ENCODE measurements at regions of chr19 and their contacts with region 1.

Region 1: GRCh38 chr19:48993175-48994034 is at the starts of genes GYS1 and RUVBL2:
- DNase-seq: peak; percentile 98
- ATAC-seq: peak; percentile 92
- H3K4me3 ChIP-seq: peak within 1 kb of the TSS; percentile 93
- H3K27ac ChIP-seq: peak within 1 kb of the TSS; percentile 36
- H3K4me1 ChIP-seq: peaks cover 6% of the 10 kb centered on the region; the same call in 1 of the 2 replicates
- H3K27me3 ChIP-seq: no peaks in the 10 kb centered on the region
- CTCF ChIP-seq: peak; percentile 72
- total RNA-seq, gene GYS1: 38.6 and 54.0 TPM in 2 replicates
- total RNA-seq, gene RUVBL2: 291 and 421 TPM in 2 replicates

Region 2: GRCh38 chr19:48553676-48554386 is 439.6 kb before region 1 on chr19:
- CTCF ChIA-PET with region 1: no interaction called
- POLR2A ChIA-PET with region 1: no interaction called
- intact Hi-C with region 1: no loop called
- DNase-seq: peak; percentile 43
- ATAC-seq: no peak
- H3K4me3 ChIP-seq: no peak overlapping the region
- H3K27ac ChIP-seq: no peak overlapping the region
- H3K4me1 ChIP-seq: peaks cover 32% of the 10 kb centered on the region
- H3K27me3 ChIP-seq: no peaks in the 10 kb centered on the region
- CTCF ChIP-seq: no peak

Region 3: DNA sequence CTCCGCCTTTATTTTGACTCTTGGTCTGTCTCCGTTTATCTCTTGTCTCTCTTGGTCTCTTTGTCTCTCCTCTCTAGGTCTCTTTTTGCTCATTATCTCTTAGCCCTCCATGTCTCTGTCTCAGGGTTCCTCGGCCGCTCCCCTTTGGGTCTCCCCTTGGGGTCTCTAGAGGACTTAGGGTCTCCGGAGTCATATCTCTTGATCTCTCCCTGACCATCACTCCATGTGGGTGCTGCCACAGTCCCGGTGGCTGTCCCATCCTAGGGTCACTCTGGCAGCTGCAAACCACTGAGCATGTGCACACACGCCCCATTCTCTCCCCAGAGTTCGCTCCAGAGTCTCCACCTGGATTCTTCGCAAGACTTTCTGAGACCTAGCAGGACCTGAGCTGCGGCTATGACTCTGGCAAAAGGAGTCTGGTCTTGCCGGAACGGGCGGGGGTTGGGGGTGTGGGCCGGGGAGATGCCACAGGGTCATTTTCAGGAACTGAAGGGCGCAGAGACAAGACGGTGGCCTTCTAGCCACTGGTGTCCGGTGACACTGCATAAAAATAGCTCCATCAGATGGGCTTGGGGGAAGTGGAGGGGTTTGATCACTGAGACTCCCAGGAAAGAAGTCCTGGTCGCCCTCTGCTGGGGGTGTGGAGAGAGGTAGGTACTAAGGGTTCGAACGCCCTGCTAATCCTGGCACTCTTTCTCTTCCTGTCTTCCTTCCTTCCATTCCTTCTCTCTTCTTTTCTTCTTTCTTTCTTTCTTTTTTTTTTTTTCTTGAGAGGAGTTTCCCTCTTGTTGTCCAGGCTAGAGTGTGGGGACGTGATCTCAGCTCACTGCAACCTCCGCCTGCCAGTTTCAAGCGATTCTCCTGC is 80.3 kb after region 1 on chr19:
- CTCF ChIA-PET with region 1: interaction called, 4 read pairs
- POLR2A ChIA-PET with region 1: no interaction called
- intact Hi-C with region 1: loop called (anchors 10 kb)
- DNase-seq: peak; percentile 57
- ATAC-seq: peak; percentile 53
- H3K4me3 ChIP-seq: peak overlapping the region; percentile 53; the same call in 1 of the 2 replicates
- H3K27ac ChIP-seq: no peak overlapping the region
- H3K4me1 ChIP-seq: no peaks in the 10 kb centered on the region
- H3K27me3 ChIP-seq: 0 out of 2 replicates have a peak, but pooled peaks cover 7% of the 10 kb centered on the region
- CTCF ChIP-seq: peak; percentile 53

Measured in PC-3 (cell line).